Panc1 (cell line): ENCODE measurements at regions of chr17 and their contacts with region 1.

Region 1: DNA sequence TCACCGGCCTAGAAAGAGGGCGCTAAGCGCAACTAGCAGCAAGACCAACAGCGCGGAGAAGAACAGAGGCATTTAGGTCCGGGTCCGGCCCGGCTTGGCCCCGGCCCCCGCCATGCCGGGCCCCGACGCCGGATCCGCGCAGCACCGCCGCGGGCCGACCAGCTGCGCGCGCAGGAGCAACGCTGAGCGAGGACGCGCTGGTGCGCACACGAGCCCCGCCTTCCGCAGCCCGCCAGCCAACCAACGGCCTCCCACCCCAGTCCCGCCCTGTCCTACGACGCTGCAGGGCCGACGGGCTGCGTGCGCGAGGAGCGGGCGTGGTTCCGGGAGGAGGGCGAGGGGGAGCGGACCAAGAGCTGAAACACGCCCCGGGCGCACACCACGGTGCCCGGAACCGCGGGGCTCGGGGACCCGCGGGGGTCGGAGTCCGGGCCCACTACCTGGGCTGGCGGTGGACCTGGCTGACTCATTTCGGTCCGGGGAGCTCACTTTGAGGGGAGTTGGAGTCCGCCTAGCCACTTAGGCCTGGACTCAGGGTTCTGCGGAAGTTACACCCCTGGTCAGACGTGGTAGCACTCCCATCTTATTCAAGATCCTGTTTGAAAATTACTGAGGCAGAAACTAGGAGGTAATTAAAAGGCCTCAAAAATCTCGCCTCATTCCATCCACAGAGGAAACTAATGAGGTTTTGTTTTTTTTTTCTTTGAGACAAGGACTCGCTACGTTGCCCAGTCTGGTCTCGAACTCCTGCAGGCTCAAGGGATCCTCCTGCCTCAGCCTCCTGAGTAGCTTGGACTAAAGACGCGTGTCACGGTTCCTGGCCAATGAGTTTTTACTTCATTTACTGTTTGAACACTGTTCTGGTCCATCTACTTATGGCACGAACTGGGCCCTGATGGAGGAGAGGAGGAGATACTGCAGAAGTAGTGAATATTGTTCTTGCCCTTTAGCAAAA is at the start of gene BLTP2:
- DNase-seq: peak; percentile 65
- ATAC-seq: peak; percentile 98
- H3K4me3 ChIP-seq: peak within 1 kb of the TSS; percentile 90 to 97
- H3K27ac ChIP-seq: peak within 1 kb of the TSS; percentile 96
- H3K4me1 ChIP-seq: peaks cover 28% of the 10 kb centered on the region
- H3K27me3 ChIP-seq: no peaks in the 10 kb centered on the region
- CTCF ChIP-seq: no peak
- total RNA-seq, gene BLTP2: 271 TPM

Region 2: DNA sequence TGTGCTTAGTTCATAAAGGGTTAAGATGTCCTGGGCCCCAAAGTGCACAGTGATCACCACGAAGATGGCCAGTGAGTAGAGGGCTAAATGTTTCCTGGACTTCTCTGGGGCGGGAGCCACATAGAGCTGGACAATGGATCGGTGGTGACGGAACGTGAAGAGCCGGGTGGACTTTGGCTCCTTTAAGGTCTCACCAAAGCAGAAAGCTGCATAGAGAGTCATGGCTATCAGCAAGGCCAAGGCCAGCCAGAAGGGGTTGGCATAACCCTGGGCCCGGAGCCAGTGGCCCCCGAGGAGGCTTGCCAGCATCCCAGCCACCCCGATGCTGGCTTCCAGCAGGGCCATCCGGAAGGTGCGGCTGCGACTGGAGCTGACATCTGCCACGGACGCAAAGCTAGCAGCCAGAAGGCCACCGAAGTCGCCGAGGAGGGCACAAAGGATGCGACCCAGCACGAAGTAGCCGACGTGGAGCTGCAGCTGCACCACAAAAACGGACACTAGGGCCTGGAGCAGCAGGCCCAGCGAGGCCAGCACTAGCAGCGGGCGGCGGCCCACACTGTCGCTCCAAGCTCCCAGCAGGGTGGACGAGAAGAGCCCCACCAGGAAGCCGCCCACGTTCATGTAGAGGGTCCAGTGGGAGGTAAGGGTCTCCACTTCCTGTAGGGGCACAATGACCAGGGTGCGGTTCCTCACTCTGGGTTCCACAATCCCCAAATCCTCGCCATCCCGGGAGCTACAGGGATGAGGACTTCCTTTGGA is 240.3 kb before region 1 on chr17:
- CTCF ChIA-PET with region 1: no interaction called
- POLR2A ChIA-PET with region 1: no interaction called
- in situ Hi-C with region 1: no loop called
- intact Hi-C with region 1: no loop called
- DNase-seq: no peak
- ATAC-seq: peak; percentile 4; the same call in 1 of the 2 replicates
- H3K4me3 ChIP-seq: peak overlapping the region; percentile 59 to 73
- H3K27ac ChIP-seq: peak overlapping the region; percentile 64
- H3K4me1 ChIP-seq: peaks cover 8% of the 10 kb centered on the region
- H3K27me3 ChIP-seq: no peaks in the 10 kb centered on the region
- CTCF ChIP-seq: no peak

Region 3: GRCh38 chr17:28509789-28510188 is 135.5 kb before region 1 on chr17:
- CTCF ChIA-PET with region 1: no interaction called
- POLR2A ChIA-PET with region 1: no interaction called
- in situ Hi-C with region 1: no loop called
- intact Hi-C with region 1: no loop called
- DNase-seq: no peak
- ATAC-seq: no peak
- H3K4me3 ChIP-seq: no peak overlapping the region
- H3K27ac ChIP-seq: no peak overlapping the region
- H3K4me1 ChIP-seq: no peaks in the 10 kb centered on the region
- H3K27me3 ChIP-seq: peaks cover 4% of the 10 kb centered on the region; the same call in 1 of the 2 replicates
- CTCF ChIP-seq: no peak

Region 4: GRCh38 chr17:28623696-28624095 is 21.6 kb before region 1 on chr17:
- CTCF ChIA-PET with region 1: no interaction called
- POLR2A ChIA-PET with region 1: interaction called, 15 read pairs
- in situ Hi-C with region 1: no loop called
- intact Hi-C with region 1: no loop called
- DNase-seq: no peak
- ATAC-seq: no peak
- H3K4me3 ChIP-seq: no peak overlapping the region
- H3K27ac ChIP-seq: no peak overlapping the region
- H3K4me1 ChIP-seq: no peaks in the 10 kb centered on the region
- H3K27me3 ChIP-seq: no peaks in the 10 kb centered on the region
- CTCF ChIP-seq: no peak

Region 5: DNA sequence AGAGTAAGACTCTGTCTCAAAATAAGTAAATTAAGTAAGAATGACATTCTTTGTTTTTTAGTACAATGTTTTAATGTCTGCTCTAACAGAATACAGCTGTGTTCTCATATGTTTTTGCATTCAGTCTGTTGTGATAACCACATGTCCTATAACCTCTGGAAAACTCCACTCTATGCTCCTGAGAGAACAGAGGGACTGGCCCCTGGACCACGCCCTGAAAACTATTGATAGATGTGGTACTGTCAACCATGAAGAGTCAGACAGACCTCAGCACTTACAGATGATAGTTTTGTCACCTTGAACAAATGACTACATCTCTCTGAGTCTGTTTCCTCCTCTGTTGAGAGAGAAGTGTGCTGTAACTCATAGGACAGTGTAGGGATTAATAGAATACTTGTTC is 24.7 kb after region 1 on chr17:
- CTCF ChIA-PET with region 1: no interaction called
- POLR2A ChIA-PET with region 1: no interaction called
- in situ Hi-C with region 1: no loop called
- intact Hi-C with region 1: no loop called
- DNase-seq: no peak
- ATAC-seq: no peak
- H3K4me3 ChIP-seq: no peak overlapping the region
- H3K27ac ChIP-seq: no peak overlapping the region
- H3K4me1 ChIP-seq: no peaks in the 10 kb centered on the region
- H3K27me3 ChIP-seq: no peaks in the 10 kb centered on the region
- CTCF ChIP-seq: no peak

Region 6: DNA sequence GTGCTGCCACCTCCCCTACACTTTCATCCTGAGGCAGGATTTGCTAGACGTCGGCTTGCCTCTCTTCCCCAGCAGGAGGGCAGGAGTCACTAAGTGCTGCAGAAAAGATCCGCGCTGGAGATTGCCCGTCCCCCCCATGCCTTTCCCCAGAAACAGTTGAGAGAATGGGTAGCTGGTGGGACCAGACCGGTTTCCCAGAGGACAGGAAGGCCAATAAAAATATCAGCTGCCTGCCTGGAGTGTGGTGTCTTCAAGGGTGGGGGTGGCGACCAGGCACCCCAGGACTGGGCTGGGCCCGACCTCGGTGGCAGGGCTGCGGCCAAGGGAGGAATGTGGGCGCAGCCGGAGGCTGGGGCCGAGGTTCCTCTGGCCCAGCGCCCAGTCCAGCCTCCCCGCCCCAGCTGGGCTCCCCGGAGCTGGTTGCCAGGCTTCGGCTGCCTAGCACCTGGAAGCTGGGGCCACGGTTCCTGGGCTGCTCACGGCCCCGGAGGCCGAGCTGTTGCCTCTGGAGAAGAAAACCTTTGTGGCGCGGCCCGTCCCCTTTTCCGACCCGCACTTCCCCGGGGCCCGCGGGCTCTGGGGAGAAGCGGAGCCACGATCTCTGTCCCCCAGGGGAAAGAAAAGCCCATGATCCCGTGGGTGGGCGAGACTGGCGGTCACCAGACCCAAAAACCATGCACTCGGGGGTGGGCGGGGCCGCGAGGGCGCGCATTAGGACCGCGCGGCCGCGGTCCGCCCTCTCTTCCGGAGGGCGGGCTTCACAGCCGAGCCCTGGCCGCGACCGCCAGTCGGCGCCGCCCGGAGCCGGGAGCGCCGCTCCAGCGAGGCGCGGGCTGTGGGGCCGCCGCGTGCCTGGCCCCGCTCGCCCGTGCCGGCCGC is 98.2 kb after region 1 on chr17 and contains the start of gene TRAF4:
- CTCF ChIA-PET with region 1: interaction called, 11 read pairs
- POLR2A ChIA-PET with region 1: interaction called, 3 read pairs
- in situ Hi-C with region 1: no loop called
- intact Hi-C with region 1: no loop called
- DNase-seq: no peak
- ATAC-seq: peak; percentile 85
- H3K4me3 ChIP-seq: peak within 1 kb of the TSS; percentile 89 to 99
- H3K27ac ChIP-seq: peak within 1 kb of the TSS; percentile 99
- H3K4me1 ChIP-seq: peaks cover 39% of the 10 kb centered on the region
- H3K27me3 ChIP-seq: no peaks in the 10 kb centered on the region
- CTCF ChIP-seq: no peak
- total RNA-seq, gene TRAF4: 108 TPM

Region 7: DNA sequence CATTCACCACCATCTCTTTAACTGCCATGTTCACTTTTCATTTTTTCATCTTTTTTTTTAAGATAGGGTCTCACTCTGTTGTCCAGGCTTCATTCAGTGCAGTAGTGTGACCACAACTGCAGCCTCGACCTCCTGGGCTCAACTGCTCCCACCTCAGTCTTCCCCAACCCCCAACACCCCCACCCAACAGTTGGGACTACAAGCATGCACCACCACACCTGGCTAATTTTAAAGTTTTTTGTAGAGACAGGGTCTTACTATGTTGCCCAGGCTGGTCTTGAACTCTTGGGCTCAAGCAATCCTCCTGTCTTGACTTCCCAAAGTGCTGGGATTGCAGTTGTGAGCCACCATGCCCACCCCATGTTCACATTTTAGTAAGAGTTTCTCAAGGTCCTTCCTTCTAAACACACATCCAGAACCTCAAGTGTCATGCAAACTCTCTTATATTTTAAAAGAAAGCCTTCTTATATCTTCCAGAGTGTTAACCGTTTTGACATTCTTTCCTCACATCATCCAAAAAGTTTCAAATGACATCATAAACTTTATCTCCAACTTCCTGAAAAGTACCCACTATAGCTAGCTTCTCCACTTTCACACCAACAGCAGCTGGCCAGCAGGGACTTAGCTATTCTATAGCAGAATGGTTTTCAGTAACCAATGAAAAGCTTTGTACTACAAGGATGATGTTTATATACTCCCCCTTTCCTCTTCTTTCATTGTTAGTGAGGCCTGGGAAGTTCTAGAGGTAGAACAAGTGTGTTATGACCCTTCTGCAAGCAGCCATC is 147.8 kb after region 1 on chr17:
- CTCF ChIA-PET with region 1: no interaction called
- POLR2A ChIA-PET with region 1: no interaction called
- in situ Hi-C with region 1: no loop called
- intact Hi-C with region 1: no loop called
- DNase-seq: no peak
- ATAC-seq: peak; percentile 64
- H3K4me3 ChIP-seq: no peak overlapping the region
- H3K27ac ChIP-seq: no peak overlapping the region
- H3K4me1 ChIP-seq: no peaks in the 10 kb centered on the region
- H3K27me3 ChIP-seq: no peaks in the 10 kb centered on the region
- CTCF ChIP-seq: no peak